Heart right ventricle (tissue), 16 donors: ENCODE measurements at regions of chr3 and their contacts with region 1.

Region 1: GRCh38 chr3:66276705-66277274 is 56.0 kb downstream of the SLC25A26 start:
- DNase-seq: peak in 1 of 2 donors; percentile 75
- ATAC-seq: peak in 4 of 8 donors; percentile 38 to 79 (median 58)
- H3K4me3 ChIP-seq: no peak overlapping the region
- H3K27ac ChIP-seq: no peak overlapping the region
- H3K4me1 ChIP-seq: peaks cover 0 to 7% (median 0%) of the 10 kb centered on the region in 9 donors
- H3K27me3 ChIP-seq: no peaks in the 10 kb centered on the region
- CTCF ChIP-seq: peak; percentile 49 to 83 (median 73)

Region 2: GRCh38 chr3:66302288-66302687 is 25.5 kb after region 1 on chr3:
- intact Hi-C with region 1: no loop called
- DNase-seq: no peak
- ATAC-seq: peak in 4 of 8 donors; percentile 8 to 48 (median 44)
- H3K4me3 ChIP-seq: no peak overlapping the region
- H3K27ac ChIP-seq: peak overlapping the region in 3 of 10 donors; percentile 15 to 84 (median 21)
- H3K4me1 ChIP-seq: peaks cover 2 to 16% (median 12%) of the 10 kb centered on the region in 9 donors
- H3K27me3 ChIP-seq: no peaks in the 10 kb centered on the region
- CTCF ChIP-seq: no peak

Region 3: DNA sequence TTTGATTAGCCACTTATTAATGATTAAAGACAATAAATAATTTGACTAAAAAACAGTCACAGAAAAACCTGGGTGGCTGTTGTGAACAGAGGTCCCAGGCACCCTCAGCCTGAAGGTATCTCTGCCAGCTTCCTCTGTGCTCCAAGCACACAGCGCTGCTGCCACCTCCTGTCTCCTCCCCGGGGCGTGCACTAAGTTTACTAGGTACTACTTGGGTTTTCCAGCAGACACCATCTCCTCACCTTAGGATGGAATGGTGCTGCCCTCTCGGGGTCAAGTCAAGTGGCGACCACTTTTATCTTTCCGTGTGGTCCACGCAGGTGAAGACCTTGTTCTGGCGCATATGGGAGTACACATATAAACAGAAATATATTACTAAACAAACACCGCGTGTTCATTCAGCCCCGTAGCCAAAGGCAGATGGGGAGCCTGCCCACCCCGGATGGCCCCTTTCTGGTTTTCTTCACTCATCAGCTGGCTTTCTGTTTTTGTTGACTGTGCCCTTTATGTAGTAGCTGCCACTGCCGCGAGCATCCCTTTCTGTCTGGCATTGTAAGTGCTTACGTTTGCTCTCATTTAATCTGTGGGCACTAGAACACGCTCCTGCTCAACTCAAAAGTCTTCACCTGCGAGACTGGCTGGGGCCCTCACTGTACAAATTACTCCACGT is 96.0 kb after region 1 on chr3:
- intact Hi-C with region 1: loop called (anchors 1 to 5 kb)
- DNase-seq: peak; percentile 59 to 63
- ATAC-seq: peak; percentile 73 to 88 (median 84)
- H3K4me3 ChIP-seq: no peak overlapping the region
- H3K27ac ChIP-seq: peak overlapping the region in 5 of 10 donors; percentile 37 to 77 (median 62)
- H3K4me1 ChIP-seq: peaks cover 0 to 46% (median 16%) of the 10 kb centered on the region in 9 donors
- H3K27me3 ChIP-seq: no peaks in the 10 kb centered on the region
- CTCF ChIP-seq: peak in 8 of 9 donors; percentile 36 to 74 (median 61)

Region 4: GRCh38 chr3:66638717-66639116 is 361.9 kb after region 1 on chr3:
- intact Hi-C with region 1: no loop called
- DNase-seq: no peak
- ATAC-seq: no peak
- H3K4me3 ChIP-seq: no peak overlapping the region
- H3K27ac ChIP-seq: no peak overlapping the region
- H3K4me1 ChIP-seq: peaks cover 0 to 6% (median 0%) of the 10 kb centered on the region in 9 donors
- H3K27me3 ChIP-seq: no peaks in the 10 kb centered on the region
- CTCF ChIP-seq: no peak

Region 5: GRCh38 chr3:66822186-66823008 is 545.6 kb after region 1 on chr3:
- intact Hi-C with region 1: loop called (anchors 1 to 5 kb)
- DNase-seq: peak; percentile 17 to 53
- ATAC-seq: peak; percentile 46 to 78 (median 73)
- H3K4me3 ChIP-seq: no peak overlapping the region
- H3K27ac ChIP-seq: no peak overlapping the region
- H3K4me1 ChIP-seq: no peaks in the 10 kb centered on the region
- H3K27me3 ChIP-seq: peaks cover 0 to under 1% (median 0%) of the 10 kb centered on the region in 7 donors
- CTCF ChIP-seq: peak; percentile 38 to 86 (median 74)